ENCODE measurements at regions of chr5 and their contacts with region 1.

Region 1: DNA sequence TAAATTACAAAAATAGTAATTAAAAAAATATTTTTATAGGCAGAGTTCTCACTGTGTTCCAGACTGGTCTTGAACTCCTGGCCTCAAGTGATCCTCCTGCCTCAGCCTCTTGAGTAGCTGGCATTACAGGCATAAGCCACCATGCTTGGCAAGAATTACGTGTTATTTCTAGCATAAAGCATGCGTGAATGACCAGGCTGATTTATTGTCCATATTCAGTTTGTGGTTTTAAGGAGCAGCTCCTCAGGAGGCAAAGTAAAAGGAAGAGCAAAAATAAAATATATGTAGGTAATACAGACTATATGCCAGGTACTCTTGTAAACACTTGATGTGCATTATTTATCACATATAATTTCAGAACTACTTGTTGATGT is 7.1 kb upstream of the CD180 start:
- DNase-seq: no peak
- H3K4me3 Mint-ChIP-seq: no peak overlapping the region
- H3K27ac Mint-ChIP-seq: peak overlapping the region; percentile 98
- H3K4me1 Mint-ChIP-seq: peaks cover 98% of the 10 kb centered on the region
- H3K27me3 Mint-ChIP-seq: no peaks in the 10 kb centered on the region

Region 2: GRCh38 chr5:67095346-67096171 is 108.1 kb before region 1 on chr5:
- intact Hi-C with region 1: no loop called
- DNase-seq: no peak
- H3K4me3 Mint-ChIP-seq: no peak overlapping the region
- H3K27ac Mint-ChIP-seq: no peak overlapping the region
- H3K4me1 Mint-ChIP-seq: peaks cover 22% of the 10 kb centered on the region
- H3K27me3 Mint-ChIP-seq: no peaks in the 10 kb centered on the region

Region 3: DNA sequence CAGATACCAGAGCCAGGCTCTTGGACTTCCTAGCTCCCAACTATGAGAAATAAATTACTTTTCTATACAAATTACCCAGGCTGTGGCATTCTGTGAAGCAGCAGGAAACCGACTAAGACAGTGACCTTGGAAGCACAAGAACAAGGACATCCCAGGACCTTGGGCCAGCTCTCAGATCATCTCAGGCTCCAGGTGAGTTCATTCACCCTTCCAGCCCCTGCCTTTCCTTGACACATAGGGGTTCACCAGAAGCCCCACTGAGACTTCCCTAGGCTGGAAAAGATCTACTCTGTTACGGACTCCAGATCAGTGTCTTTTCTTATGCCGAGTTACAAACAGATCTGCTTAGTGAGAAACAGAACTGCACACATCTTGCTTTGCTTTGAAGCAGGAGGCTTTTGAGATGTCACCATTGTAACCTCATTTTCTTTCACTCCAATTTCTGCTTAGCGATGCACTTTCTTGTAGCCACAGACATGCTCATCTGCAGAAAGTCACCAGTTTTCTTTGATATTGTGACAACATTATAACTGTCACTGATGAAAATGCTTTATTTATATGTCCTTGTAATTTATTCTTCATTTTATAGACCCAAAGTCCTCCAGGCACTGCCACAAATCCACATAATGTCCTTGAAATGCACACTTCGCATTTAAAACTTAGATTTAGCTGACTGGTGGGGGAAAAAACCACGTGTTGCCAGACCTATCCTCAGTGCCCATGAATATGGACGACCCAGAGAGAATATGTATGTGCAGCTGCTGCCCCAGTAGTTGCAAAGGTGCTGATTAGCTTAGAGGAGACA is 15.2 kb before region 1 on chr5:
- intact Hi-C with region 1: loop called (anchors 1 kb)
- DNase-seq: no peak
- H3K4me3 Mint-ChIP-seq: no peak overlapping the region
- H3K27ac Mint-ChIP-seq: peak overlapping the region; percentile 83
- H3K4me1 Mint-ChIP-seq: peaks cover 63% of the 10 kb centered on the region
- H3K27me3 Mint-ChIP-seq: no peaks in the 10 kb centered on the region

Measured in activated T-helper 1 cell treated with anti-CD3 and anti-CD28 coated beads, Interleukin-12 subunit alpha, Interleukin-12 subunit beta, Interleukin-2, Interleukin-4 antibody, amounts not matched to agents 30 ng/mL and 10 ng/mL and 1 ng/mL, durations not matched to agents 14 hours and 24 hours and 36 hours (primary cell).